ENCODE measurements at regions of chr6 and their contacts with region 1.

Region 1: DNA sequence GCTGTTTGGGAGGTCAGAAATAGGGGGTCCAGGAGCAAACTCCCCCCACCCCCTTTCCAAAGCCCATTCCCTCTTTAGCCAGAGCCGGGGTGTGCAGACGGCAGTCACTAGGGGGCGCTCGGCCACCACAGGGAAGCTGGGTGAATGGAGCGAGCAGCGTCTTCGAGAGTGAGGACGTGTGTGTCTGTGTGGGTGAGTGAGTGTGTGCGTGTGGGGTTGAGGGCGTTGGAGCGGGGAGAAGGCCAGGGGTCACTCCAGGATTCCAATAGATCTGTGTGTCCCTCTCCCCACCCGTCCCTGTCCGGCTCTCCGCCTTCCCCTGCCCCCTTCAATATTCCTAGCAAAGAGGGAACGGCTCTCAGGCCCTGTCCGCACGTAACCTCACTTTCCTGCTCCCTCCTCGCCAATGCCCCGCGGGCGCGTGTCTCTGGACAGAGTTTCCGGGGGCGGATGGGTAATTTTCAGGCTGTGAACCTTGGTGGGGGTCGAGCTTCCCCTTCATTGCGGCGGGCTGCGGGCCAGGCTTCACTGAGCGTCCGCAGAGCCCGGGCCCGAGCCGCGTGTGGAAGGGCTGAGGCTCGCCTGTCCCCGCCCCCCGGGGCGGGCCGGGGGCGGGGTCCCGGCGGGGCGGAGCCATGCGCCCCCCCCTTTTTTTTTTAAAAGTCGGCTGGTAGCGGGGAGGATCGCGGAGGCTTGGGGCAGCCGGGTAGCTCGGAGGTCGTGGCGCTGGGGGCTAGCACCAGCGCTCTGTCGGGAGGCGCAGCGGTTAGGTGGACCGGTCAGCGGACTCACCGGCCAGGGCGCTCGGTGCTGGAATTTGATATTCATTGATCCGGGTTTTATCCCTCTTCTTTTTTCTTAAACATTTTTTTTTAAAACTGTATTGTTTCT is at the start of gene VEGFA:
- DNase-seq: peak; percentile 88
- H3K4me3 ChIP-seq: peak within 1 kb of the TSS; percentile 77 to 83
- H3K27ac ChIP-seq: peak within 1 kb of the TSS; percentile 90 to 95
- H3K4me1 ChIP-seq: peaks cover 12% of the 10 kb centered on the region
- H3K27me3 ChIP-seq: no peaks in the 10 kb centered on the region
- CTCF ChIP-seq: peak; percentile 93 to 99 (median 98)
- POLR2A ChIP-seq: peak; percentile 92
- total RNA-seq, gene VEGFA: 127 to 335 TPM

Region 2: GRCh38 chr6:42808492-42809483 is 961.0 kb before region 1 on chr6:
- intact Hi-C with region 1: no loop called
- DNase-seq: no peak
- H3K4me3 ChIP-seq: no peak overlapping the region
- H3K27ac ChIP-seq: peak overlapping the region; percentile 14 to 16
- H3K4me1 ChIP-seq: no peaks in the 10 kb centered on the region
- H3K27me3 ChIP-seq: no peaks in the 10 kb centered on the region
- CTCF ChIP-seq: no peak
- POLR2A ChIP-seq: no peak

Region 3: DNA sequence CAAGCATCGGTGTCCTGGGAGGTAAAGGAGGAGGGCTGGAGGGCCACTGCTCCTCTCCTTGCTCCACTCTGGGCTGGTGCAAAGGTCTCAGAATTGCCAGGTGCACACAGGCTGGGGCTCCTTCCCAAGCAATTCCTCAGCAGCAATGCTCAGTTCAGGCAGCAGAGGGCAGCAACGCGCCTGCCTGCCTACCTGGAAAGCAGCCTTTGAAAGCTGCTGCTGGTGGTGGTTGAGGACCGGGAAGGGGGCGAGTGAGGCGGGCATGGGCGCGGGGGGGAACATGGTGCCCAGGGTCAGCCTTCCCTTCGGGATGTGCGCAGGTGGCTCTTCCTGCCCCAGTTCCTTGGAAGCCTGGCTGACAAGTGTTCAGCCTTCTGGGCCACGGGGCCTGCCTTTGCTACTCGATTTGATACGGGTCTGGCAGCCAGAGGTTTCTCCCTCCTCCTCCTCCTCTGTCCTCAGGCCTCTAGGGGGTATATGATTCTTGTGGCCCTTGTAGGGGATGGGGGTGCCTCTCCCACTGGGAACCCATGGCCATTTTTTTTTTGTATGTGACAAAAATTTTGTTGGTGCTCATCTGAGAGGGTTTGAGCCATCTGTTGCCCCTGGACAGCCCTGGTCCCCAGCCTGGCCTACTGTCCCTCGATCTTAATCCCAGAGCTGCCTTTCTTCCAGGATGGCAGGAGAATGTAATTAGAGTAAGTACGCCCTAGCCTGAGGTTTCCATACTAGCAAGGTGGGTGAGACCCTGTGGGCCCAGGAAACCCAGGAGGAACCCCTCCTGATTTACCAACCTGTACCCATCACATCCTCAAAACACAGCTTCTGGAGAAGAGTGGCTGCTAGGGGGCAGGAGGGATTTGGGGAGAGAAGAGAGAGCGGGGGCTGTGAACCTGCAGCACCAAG is 102.3 kb before region 1 on chr6:
- intact Hi-C with region 1: loop called (anchors 5 kb)
- DNase-seq: peak; percentile 77
- H3K4me3 ChIP-seq: no peak overlapping the region
- H3K27ac ChIP-seq: peak overlapping the region; percentile 33 to 73
- H3K4me1 ChIP-seq: peaks cover 15% of the 10 kb centered on the region
- H3K27me3 ChIP-seq: no peaks in the 10 kb centered on the region
- CTCF ChIP-seq: peak; percentile 81 to 96 (median 91)
- POLR2A ChIP-seq: no peak

Region 4: GRCh38 chr6:43900911-43901732 is 131.4 kb after region 1 on chr6:
- intact Hi-C with region 1: loop called (anchors 5 kb)
- DNase-seq: peak; percentile 9
- H3K4me3 ChIP-seq: no peak overlapping the region
- H3K27ac ChIP-seq: peak overlapping the region; percentile 0 to 5
- H3K4me1 ChIP-seq: no peaks in the 10 kb centered on the region
- H3K27me3 ChIP-seq: no peaks in the 10 kb centered on the region
- CTCF ChIP-seq: no peak
- POLR2A ChIP-seq: no peak

Region 5: DNA sequence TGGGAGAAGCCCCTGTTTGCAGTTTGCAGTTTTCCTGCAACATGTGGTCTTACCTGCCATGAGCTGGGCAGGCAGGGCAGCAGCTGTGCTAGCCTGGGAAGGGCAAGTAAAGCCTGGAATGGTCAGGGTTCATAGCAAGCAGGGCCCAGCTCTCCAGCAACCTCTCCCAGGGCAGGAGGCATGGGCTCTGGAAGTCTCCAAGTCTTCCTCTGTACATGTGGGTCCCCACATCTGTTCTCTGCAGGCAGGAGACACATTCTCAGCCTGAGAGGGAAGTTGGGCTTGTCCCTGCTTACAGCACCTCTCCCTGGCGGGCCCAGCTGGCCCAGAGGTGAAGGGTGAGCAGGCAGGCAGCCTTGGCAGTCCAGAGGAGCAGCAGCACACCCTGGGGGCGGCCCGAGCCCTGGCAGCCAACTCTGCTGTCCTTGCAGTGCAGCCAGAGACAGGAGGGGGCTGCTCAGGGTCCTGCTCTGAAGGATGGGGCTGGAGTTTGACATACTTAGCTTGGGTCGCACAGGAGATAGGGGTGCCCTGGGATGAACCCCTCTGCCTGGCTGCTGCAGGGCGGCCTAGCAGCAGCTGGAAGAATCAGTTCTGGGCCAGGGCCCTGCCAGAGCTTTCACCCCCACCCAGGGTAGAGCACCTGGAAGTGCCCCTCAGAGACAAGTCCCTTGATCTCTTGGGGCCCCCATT is 181.4 kb after region 1 on chr6:
- intact Hi-C with region 1: loop called (anchors 2 kb)
- DNase-seq: no peak
- H3K4me3 ChIP-seq: no peak overlapping the region
- H3K27ac ChIP-seq: no peak overlapping the region
- H3K4me1 ChIP-seq: no peaks in the 10 kb centered on the region
- H3K27me3 ChIP-seq: no peaks in the 10 kb centered on the region
- CTCF ChIP-seq: peak in 1 of 4 experiments; percentile 27
- POLR2A ChIP-seq: no peak

Region 6: GRCh38 chr6:44002593-44003344 is 233.0 kb after region 1 on chr6:
- intact Hi-C with region 1: loop called (anchors 5 kb)
- DNase-seq: peak; percentile 32
- H3K4me3 ChIP-seq: peak overlapping the region in 1 of 2 donors; percentile 21
- H3K27ac ChIP-seq: no peak overlapping the region
- H3K4me1 ChIP-seq: peaks cover 5% of the 10 kb centered on the region
- H3K27me3 ChIP-seq: peaks cover 2% of the 10 kb centered on the region
- CTCF ChIP-seq: peak in 2 of 4 experiments; percentile 29 to 55
- POLR2A ChIP-seq: no peak

Region 7: DNA sequence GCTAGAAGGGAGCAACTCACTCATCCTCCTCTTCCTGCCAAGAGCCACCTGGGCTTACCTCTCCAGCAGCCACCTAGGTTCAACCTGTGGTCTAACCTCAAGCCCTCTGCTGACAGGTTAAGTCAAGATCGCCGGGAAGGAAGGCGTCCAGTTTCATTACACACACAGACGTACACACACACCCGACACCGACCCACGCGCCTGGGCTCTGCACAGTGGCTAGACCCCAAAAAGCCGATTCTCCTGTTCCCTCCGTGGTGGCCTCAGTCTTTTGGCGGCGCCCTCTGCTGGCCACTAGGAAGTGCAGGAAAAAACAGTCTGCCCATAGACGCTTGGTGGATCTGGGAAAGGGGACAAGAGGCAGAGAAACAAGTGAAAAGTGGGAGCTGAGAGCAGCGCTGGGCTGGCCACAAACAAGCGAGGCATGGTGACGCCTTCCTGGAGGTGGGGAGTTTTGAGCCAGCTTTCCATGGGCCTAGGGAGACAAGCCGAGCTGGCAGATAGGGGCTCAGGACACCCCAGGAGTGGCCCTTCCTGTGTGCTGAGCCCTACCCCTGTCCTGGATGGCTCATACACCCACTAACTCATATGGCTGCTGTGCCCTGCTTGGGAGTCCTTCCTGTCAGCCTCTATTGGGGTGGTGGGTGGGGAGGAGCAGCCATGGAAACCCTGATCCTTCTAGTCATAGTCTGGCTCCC is 304.8 kb after region 1 on chr6:
- intact Hi-C with region 1: loop called (anchors 1 kb)
- DNase-seq: peak; percentile 52
- H3K4me3 ChIP-seq: no peak overlapping the region
- H3K27ac ChIP-seq: peak overlapping the region; percentile 22 to 64
- H3K4me1 ChIP-seq: peaks cover 11% of the 10 kb centered on the region
- H3K27me3 ChIP-seq: no peaks in the 10 kb centered on the region
- CTCF ChIP-seq: peak; percentile 92 to 96 (median 93)
- POLR2A ChIP-seq: no peak